PC-3 (cell line): ENCODE measurements at regions of chr15 and their contacts with region 1.

Region 1: GRCh38 chr15:64731012-64731806 is 44.2 kb downstream of the RBPMS2 start:
- DNase-seq: peak; percentile 85
- ATAC-seq: peak; percentile 91
- H3K4me3 ChIP-seq: peak overlapping the region; percentile 62
- H3K27ac ChIP-seq: no peak overlapping the region
- H3K4me1 ChIP-seq: no peaks in the 10 kb centered on the region
- H3K27me3 ChIP-seq: no peaks in the 10 kb centered on the region
- CTCF ChIP-seq: peak; percentile 86

Region 2: DNA sequence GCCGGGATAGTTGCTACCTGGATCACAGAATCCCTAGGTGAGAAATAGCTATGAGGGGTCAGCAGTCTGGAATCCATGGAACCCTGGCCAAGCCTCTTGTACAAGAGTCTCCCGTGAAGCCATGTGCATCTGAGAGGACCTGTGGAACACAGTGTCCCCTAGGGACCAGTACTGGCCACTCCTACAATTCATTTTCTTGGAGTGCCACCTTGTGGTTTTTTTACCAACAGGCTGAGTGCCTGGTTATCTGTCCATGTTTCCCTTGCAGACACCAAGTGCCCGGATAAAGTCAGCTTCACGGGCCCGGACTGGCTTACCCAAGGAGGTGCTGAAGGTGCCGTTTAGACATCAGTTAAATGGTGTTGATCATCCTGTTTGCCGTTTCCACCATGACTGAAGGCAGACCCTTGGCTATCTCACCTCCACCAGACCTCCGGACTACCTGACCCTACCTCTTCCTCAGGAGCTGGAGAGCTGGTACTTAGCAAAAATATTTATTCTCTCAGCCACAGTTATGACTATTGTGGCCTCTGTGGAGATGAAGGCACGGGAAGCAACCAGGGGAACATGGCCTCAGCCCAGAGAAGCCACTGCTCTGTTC is 49.7 kb before region 1 on chr15:
- CTCF ChIA-PET with region 1: interaction called, 14 read pairs
- POLR2A ChIA-PET with region 1: interaction called, 12 read pairs
- intact Hi-C with region 1: loop called (anchors 1 kb)
- DNase-seq: peak; percentile 77
- ATAC-seq: peak; percentile 97
- H3K4me3 ChIP-seq: no peak overlapping the region
- H3K27ac ChIP-seq: no peak overlapping the region
- H3K4me1 ChIP-seq: no peaks in the 10 kb centered on the region
- H3K27me3 ChIP-seq: no peaks in the 10 kb centered on the region
- CTCF ChIP-seq: peak; percentile 87

Region 3: DNA sequence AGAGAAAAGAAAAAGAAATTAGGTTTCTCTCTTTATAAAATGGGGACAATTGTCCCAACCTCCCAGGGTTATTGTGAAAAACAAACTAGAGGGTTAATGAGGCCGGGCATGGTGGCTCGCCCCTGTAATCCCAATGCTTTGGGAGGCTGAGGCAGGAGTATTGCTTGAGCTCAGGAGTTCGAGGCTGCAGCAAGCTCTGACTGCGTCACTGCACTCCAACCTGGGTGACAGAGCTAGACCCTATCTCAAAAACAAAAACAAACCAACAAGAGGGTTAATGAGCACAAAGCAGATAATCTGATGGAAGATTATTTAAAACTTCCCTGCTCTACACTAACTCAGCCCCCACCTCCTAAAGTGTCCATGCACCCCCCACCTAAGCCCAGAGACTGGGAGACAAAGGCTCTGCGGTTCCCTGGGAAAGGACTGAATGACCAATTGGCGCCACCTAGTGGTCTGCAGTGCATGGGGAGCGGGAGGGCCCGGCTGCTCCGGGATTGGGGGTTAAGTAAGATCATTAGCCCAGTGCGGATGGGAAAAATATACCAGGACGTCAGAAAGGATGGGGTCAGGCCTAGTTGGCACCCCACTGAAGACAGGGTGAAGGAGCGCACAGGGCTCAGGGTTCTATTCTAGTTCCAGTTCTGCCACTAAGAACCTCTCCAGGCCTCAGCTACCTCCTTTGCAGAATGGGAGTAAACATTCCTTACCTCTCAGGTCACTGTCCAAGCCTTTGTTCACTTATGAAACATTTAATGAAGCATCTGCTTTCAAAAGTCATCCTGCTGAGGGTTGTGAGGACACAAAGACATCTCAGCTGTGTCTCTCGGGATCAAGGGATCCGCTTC is 78.7 kb after region 1 on chr15:
- CTCF ChIA-PET with region 1: interaction called, 7 read pairs
- POLR2A ChIA-PET with region 1: no interaction called
- intact Hi-C with region 1: loop called (anchors 1 kb)
- DNase-seq: peak; percentile 73
- ATAC-seq: peak; percentile 88
- H3K4me3 ChIP-seq: no peak overlapping the region
- H3K27ac ChIP-seq: no peak overlapping the region
- H3K4me1 ChIP-seq: no peaks in the 10 kb centered on the region
- H3K27me3 ChIP-seq: no peaks in the 10 kb centered on the region
- CTCF ChIP-seq: peak; percentile 94

Region 4: GRCh38 chr15:64836023-64836536 is 104.9 kb after region 1 on chr15:
- CTCF ChIA-PET with region 1: no interaction called
- POLR2A ChIA-PET with region 1: no interaction called
- intact Hi-C with region 1: loop called (anchors 1 kb)
- DNase-seq: no peak
- ATAC-seq: no peak
- H3K4me3 ChIP-seq: no peak overlapping the region
- H3K27ac ChIP-seq: no peak overlapping the region
- H3K4me1 ChIP-seq: peaks cover 7% of the 10 kb centered on the region; the same call in 1 of the 2 replicates
- H3K27me3 ChIP-seq: no peaks in the 10 kb centered on the region
- CTCF ChIP-seq: no peak